Aorta (tissue), 5 donors: ENCODE measurements at regions of chr7 and their contacts with region 1.

Region 1: GRCh38 chr7:101058355-101058754 is 26.9 kb upstream of the TRIM56 start:
- DNase-seq: peak; percentile 69 to 88
- ATAC-seq: peak; percentile 81
- H3K4me3 ChIP-seq: no peak overlapping the region
- H3K27ac ChIP-seq: no peak overlapping the region
- H3K4me1 ChIP-seq: no peaks in the 10 kb centered on the region
- H3K27me3 ChIP-seq: no peaks in the 10 kb centered on the region

Region 2: DNA sequence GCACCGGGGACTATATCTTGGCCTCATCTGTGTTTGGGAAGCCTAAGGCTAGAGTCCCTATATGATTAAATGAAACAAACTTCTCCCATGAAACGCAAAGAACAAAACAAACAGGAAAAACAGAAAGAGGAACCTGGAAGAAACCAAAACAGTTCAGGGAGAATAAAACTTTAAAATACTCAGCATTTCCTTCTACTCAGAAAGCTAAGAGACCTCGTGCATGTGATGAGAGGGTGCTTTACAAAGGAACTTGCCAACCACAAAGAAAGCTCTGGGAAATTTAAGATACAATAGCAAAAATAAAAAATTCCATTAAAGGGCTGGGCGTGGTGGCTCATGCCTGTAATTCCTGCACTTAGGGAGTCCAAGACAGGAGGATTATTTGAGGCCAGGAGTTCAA is 678.2 kb before region 1 on chr7:
- intact Hi-C with region 1: no loop called
- DNase-seq: no peak
- ATAC-seq: no peak
- H3K4me3 ChIP-seq: no peak overlapping the region
- H3K27ac ChIP-seq: no peak overlapping the region
- H3K4me1 ChIP-seq: no peaks in the 10 kb centered on the region
- H3K27me3 ChIP-seq: no peaks in the 10 kb centered on the region

Region 3: DNA sequence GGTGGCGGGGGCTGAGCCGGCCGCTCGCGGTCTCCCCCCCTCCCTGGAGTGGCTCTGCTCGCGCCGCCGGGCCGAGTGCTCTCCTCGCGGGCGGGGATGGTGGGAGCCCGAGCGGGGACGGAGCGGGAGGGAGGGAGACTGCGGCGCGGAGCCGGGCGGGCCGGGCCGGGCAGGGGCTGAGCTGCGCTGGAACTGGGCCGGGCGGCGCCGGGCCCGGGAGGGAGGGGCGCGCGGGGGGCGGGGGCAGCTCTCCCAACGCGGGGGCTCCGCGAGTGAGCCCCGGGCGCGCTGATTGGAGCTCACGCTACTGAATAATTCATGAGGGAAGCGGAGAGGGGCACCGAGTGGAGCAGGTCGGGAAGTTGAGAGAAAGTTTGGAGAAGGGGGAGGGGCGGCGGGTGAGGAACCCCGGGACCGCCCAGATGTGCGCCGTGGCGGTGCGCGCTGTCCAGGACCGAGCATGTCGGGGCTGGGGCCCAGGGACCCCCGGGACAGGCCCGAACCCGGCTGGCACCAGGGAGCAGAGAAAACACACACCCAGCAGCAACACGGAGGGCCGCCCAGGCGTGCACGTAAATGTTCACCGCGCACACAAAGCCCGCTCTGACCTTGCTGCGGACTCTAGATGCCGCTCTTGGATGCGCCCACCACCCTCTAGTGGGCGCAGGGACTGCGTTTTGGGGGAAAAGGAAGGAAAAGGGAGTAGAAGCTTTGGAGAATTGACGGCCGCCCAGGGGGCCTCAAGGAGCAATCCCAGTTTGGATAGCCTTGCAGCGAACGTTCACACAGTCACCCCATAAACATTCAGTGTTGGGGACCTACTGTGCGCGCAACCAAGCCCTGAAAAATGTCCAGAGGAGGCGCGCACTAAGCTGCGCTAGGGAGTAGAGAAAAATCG is 230.8 kb before region 1 on chr7 and contains the start of gene EPHB4:
- intact Hi-C with region 1: no loop called
- DNase-seq: peak; percentile 79 to 84
- ATAC-seq: peak; percentile 80
- H3K4me3 ChIP-seq: peak within 1 kb of the TSS; percentile 42 to 53
- H3K27ac ChIP-seq: no peak within 1 kb of the TSS
- H3K4me1 ChIP-seq: no peaks in the 10 kb centered on the region
- H3K27me3 ChIP-seq: no peaks in the 10 kb centered on the region
- total RNA-seq, gene EPHB4: 44.8 to 71.6 TPM

Region 4: GRCh38 chr7:100896732-100897608 is 161.4 kb before region 1 on chr7:
- intact Hi-C with region 1: loop called (anchors 1 to 2 kb)
- DNase-seq: peak in 1 of 2 donors; percentile 92
- ATAC-seq: no peak
- H3K4me3 ChIP-seq: peak overlapping the region; percentile 12 to 15
- H3K27ac ChIP-seq: no peak overlapping the region
- H3K4me1 ChIP-seq: no peaks in the 10 kb centered on the region
- H3K27me3 ChIP-seq: no peaks in the 10 kb centered on the region

Region 5: DNA sequence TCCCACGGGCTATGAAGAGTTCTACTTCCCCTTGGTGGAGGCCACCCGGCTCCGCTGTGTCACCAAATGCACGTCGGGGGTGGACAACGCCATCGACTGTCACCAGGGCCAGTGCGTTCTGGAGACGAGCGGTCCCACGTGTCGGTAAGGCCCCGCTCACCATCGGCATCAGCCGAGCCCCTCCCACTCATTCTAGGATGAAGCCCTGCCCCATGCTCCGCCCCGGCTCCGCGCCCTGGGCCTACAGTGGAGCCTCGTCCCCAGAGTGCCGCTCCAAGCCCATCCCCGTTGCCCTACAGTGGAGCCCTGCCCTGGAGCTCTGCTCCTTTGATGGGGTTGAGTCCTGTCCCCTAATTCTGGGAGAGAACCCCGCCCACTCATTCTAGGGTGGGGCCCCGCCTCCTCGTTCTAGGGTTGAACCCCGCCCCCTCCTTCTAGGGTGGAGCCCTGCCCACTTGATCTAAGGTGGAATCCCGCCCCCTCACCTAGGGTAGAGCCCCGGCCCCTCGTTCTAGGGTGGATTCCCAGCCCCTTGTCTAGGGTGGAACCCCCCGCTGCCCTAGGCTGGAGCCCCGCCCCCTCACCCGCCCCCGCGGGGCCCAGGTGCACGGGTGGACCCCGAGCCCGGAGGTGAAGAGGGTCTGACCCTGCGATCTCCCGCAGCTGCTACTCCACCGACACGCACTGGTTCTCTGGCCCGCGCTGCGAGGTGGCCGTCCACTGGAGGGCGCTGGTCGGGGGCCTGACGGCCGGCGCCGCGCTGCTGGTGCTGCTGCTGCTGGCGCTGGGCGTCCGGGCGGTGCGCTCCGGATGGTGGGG is 92.4 kb before region 1 on chr7:
- intact Hi-C with region 1: loop called (anchors 5 kb)
- DNase-seq: peak; percentile 85 to 92
- ATAC-seq: peak; percentile 28
- H3K4me3 ChIP-seq: no peak overlapping the region
- H3K27ac ChIP-seq: no peak overlapping the region
- H3K4me1 ChIP-seq: no peaks in the 10 kb centered on the region
- H3K27me3 ChIP-seq: peaks cover 0 to 2% of the 10 kb centered on the region in 2 donors

Region 6: GRCh38 chr7:101017064-101017777 is 41.1 kb before region 1 on chr7:
- intact Hi-C with region 1: no loop called
- DNase-seq: peak; percentile 87 to 88
- ATAC-seq: peak; percentile 73
- H3K4me3 ChIP-seq: peak overlapping the region; percentile 1 to 50
- H3K27ac ChIP-seq: no peak overlapping the region
- H3K4me1 ChIP-seq: no peaks in the 10 kb centered on the region
- H3K27me3 ChIP-seq: no peaks in the 10 kb centered on the region